Activated CD4-positive, alpha-beta memory T cell treated with anti-CD3 and anti-CD28 coated beads for 36 hours (primary cell): ENCODE measurements at regions of chr11 and their contacts with region 1.

Region 1: GRCh38 chr11:47932544-47932943 is 47.8 kb upstream of the PTPRJ start:
- DNase-seq: no peak
- H3K4me3 Mint-ChIP-seq: no peak overlapping the region
- H3K27ac Mint-ChIP-seq: no peak overlapping the region
- H3K4me1 Mint-ChIP-seq: peaks cover 16% of the 10 kb centered on the region
- H3K27me3 Mint-ChIP-seq: no peaks in the 10 kb centered on the region

Region 2: GRCh38 chr11:47705721-47706120 is 226.8 kb before region 1 on chr11:
- CTCF ChIA-PET with region 1: no interaction called
- POLR2A ChIA-PET with region 1: no interaction called
- intact Hi-C with region 1: no loop called
- DNase-seq: no peak
- H3K4me3 Mint-ChIP-seq: no peak overlapping the region
- H3K27ac Mint-ChIP-seq: no peak overlapping the region
- H3K4me1 Mint-ChIP-seq: peaks cover 4% of the 10 kb centered on the region
- H3K27me3 Mint-ChIP-seq: no peaks in the 10 kb centered on the region

Region 3: DNA sequence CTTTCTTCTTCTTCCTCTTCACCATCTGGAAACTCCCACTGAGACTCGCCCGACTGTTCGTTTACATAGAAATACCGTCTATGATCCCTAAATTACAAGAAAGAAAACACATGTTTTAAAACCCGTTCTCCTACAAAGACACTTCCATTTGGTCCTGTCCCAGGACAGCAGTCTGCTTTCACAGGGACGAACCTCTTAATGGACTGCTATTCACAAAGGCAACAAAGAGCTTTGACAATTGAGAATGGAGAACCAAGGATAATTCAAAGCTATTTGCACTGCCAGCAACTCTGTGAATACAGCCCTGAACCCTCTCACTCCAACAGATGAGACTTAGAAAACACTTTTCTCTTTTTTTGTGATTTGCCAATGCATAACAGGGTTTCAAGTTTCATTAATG is 201.1 kb before region 1 on chr11:
- CTCF ChIA-PET with region 1: no interaction called
- POLR2A ChIA-PET with region 1: no interaction called
- intact Hi-C with region 1: no loop called
- DNase-seq: no peak
- H3K4me3 Mint-ChIP-seq: no peak overlapping the region
- H3K27ac Mint-ChIP-seq: no peak overlapping the region
- H3K4me1 Mint-ChIP-seq: no peaks in the 10 kb centered on the region
- H3K27me3 Mint-ChIP-seq: no peaks in the 10 kb centered on the region

Region 4: DNA sequence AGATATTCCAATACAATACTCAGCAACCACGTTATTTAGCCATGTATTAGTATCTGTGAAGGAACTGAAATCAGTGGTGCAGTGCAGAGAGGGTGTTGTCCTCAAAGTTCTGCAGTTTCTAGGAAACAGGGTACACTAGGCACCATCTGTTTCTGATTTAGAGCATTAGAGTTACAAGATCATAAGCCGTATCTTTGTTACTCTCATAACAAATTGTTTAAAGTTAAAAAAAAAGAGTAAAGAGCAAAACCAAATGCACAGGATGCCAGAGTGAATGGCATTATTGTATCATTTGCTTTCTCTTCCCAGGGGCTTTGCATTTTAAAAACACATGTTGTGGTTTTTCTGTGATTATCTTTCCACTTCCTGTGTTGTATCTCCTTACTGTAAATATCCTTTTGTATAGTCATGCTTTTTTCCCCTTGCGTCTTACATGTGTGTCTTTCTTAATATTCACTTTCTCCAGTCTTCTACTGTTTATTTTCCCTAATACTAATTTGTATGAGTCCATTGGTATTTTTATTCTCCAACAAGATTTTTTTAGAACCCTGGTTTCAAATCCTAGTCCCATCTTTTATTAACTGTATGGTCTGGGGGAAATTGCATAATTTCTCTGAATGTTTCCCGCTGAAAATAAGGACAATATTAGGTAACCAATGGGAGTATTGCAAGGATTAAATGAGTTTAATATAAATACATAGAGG is 69.2 kb before region 1 on chr11:
- CTCF ChIA-PET with region 1: interaction called, 3 read pairs
- POLR2A ChIA-PET with region 1: no interaction called
- intact Hi-C with region 1: loop called (anchors 5 kb)
- DNase-seq: no peak
- H3K4me3 Mint-ChIP-seq: no peak overlapping the region
- H3K27ac Mint-ChIP-seq: peak overlapping the region; percentile 71
- H3K4me1 Mint-ChIP-seq: peaks cover 37% of the 10 kb centered on the region
- H3K27me3 Mint-ChIP-seq: no peaks in the 10 kb centered on the region

Region 5: GRCh38 chr11:47896199-47896598 is 36.3 kb before region 1 on chr11:
- CTCF ChIA-PET with region 1: no interaction called
- POLR2A ChIA-PET with region 1: no interaction called
- intact Hi-C with region 1: no loop called
- DNase-seq: no peak
- H3K4me3 Mint-ChIP-seq: no peak overlapping the region
- H3K27ac Mint-ChIP-seq: no peak overlapping the region
- H3K4me1 Mint-ChIP-seq: peaks cover 8% of the 10 kb centered on the region
- H3K27me3 Mint-ChIP-seq: no peaks in the 10 kb centered on the region

Region 6: DNA sequence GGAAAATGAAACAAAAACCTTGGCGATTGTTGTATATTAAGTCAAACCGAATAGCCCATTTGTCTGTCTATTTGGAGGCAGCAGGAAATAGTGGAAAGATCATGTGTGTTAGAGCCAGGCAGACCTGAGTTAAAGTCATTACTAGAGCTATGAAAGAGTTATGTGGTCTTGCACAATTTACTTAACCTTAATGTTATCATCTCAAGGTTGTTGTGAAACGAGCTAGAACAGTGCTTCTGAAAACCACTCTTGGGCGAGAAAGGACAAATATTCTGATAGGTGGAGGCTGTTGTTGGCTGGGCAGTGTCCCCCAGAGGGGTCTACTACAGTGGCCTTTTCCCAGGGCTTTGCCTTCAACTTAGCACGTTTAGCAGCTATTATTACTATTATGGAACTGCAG is 24.3 kb before region 1 on chr11:
- CTCF ChIA-PET with region 1: no interaction called
- POLR2A ChIA-PET with region 1: no interaction called
- intact Hi-C with region 1: no loop called
- DNase-seq: no peak
- H3K4me3 Mint-ChIP-seq: no peak overlapping the region
- H3K27ac Mint-ChIP-seq: no peak overlapping the region
- H3K4me1 Mint-ChIP-seq: peaks cover 8% of the 10 kb centered on the region
- H3K27me3 Mint-ChIP-seq: no peaks in the 10 kb centered on the region

Region 7: GRCh38 chr11:47981050-47981621 is 48.6 kb after region 1 on chr11:
- CTCF ChIA-PET with region 1: interaction called, 9 read pairs
- POLR2A ChIA-PET with region 1: no interaction called
- intact Hi-C with region 1: loop called (anchors 1 kb)
- DNase-seq: peak; percentile 39
- H3K4me3 Mint-ChIP-seq: peak overlapping the region; percentile 89
- H3K27ac Mint-ChIP-seq: peak overlapping the region; percentile 84
- H3K4me1 Mint-ChIP-seq: peaks cover 24% of the 10 kb centered on the region
- H3K27me3 Mint-ChIP-seq: no peaks in the 10 kb centered on the region

Region 8: GRCh38 chr11:48020092-48020755 is 87.7 kb after region 1 on chr11:
- CTCF ChIA-PET with region 1: interaction called, 38 read pairs
- POLR2A ChIA-PET with region 1: no interaction called
- intact Hi-C with region 1: loop called (anchors 1 kb)
- DNase-seq: peak; percentile 80
- H3K4me3 Mint-ChIP-seq: peak overlapping the region; percentile 68
- H3K27ac Mint-ChIP-seq: peak overlapping the region; percentile 92
- H3K4me1 Mint-ChIP-seq: peaks cover 72% of the 10 kb centered on the region
- H3K27me3 Mint-ChIP-seq: no peaks in the 10 kb centered on the region

Region 9: GRCh38 chr11:48116437-48117228 is 184.1 kb after region 1 on chr11:
- CTCF ChIA-PET with region 1: interaction called, 227 read pairs
- POLR2A ChIA-PET with region 1: no interaction called
- intact Hi-C with region 1: no loop called
- DNase-seq: peak; percentile 23
- H3K4me3 Mint-ChIP-seq: no peak overlapping the region
- H3K27ac Mint-ChIP-seq: no peak overlapping the region
- H3K4me1 Mint-ChIP-seq: no peaks in the 10 kb centered on the region
- H3K27me3 Mint-ChIP-seq: no peaks in the 10 kb centered on the region